ENCODE measurements at regions of chr11 and their contacts with region 1.

Region 1: GRCh38 chr11:101668236-101668635 is 84.4 kb upstream of the TRPC6 start:
- DNase-seq: no peak
- ATAC-seq: no peak
- H3K4me3 ChIP-seq: no peak overlapping the region
- H3K27ac ChIP-seq: no peak overlapping the region
- H3K4me1 ChIP-seq: no peaks in the 10 kb centered on the region
- H3K27me3 ChIP-seq: no peaks in the 10 kb centered on the region
- CTCF ChIP-seq: no peak
- POLR2A ChIP-seq: no peak

Region 2: DNA sequence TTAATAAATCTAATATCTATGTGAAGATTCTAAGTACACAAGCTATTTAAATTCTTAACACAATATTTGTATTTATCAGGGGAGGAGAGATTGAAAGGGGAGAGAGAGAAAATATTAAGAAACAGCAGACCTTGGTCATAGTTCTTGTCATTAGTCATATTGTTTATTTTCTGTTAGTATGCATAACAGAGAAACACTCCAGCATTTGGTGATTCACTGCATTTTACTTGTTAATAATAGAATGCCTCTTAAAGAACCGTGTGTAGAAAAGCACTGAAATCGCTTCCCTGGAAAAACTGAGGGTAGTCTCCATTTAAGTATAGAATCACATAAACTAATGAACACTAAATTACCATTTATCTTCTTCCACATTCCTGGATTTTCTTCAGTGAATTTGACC is 38.3 kb after region 1 on chr11:
- intact Hi-C with region 1: loop called in 1 of 10 experiments (anchors 5 kb)
- DNase-seq: no peak
- ATAC-seq: no peak
- H3K4me3 ChIP-seq: no peak overlapping the region
- H3K27ac ChIP-seq: no peak overlapping the region
- H3K4me1 ChIP-seq: no peaks in the 10 kb centered on the region
- H3K27me3 ChIP-seq: no peaks in the 10 kb centered on the region
- CTCF ChIP-seq: no peak
- POLR2A ChIP-seq: no peak

Measured in heart left ventricle (tissue), 16 donors.